ENCODE measurements at regions of chr2 and their contacts with region 1.

Region 1: GRCh38 chr2:36355151-36355889 is at the start of gene CRIM1:
- DNase-seq: peak; percentile 93 to 98 (median 96)
- H3K4me3 ChIP-seq: peak within 1 kb of the TSS; percentile 80 to 98 (median 89)
- H3K27ac ChIP-seq: peak within 1 kb of the TSS; percentile 82 to 94
- H3K4me1 ChIP-seq: peaks cover 3 to 20% (median 12%) of the 10 kb centered on the region in 3 donors
- H3K27me3 ChIP-seq: no peaks in the 10 kb centered on the region
- CTCF ChIP-seq: no peak
- total RNA-seq, gene CRIM1: 154 TPM

Region 2: GRCh38 chr2:36223259-36223658 is 132.1 kb before region 1 on chr2:
- intact Hi-C with region 1: no loop called
- DNase-seq: no peak
- H3K4me3 ChIP-seq: no peak overlapping the region
- H3K27ac ChIP-seq: no peak overlapping the region
- H3K4me1 ChIP-seq: no peaks in the 10 kb centered on the region
- H3K27me3 ChIP-seq: no peaks in the 10 kb centered on the region
- CTCF ChIP-seq: no peak

Region 3: GRCh38 chr2:36478332-36478738 is 123.0 kb after region 1 on chr2:
- intact Hi-C with region 1: no loop called
- DNase-seq: no peak
- H3K4me3 ChIP-seq: no peak overlapping the region
- H3K27ac ChIP-seq: no peak overlapping the region
- H3K4me1 ChIP-seq: no peaks in the 10 kb centered on the region
- H3K27me3 ChIP-seq: no peaks in the 10 kb centered on the region
- CTCF ChIP-seq: no peak

Region 4: DNA sequence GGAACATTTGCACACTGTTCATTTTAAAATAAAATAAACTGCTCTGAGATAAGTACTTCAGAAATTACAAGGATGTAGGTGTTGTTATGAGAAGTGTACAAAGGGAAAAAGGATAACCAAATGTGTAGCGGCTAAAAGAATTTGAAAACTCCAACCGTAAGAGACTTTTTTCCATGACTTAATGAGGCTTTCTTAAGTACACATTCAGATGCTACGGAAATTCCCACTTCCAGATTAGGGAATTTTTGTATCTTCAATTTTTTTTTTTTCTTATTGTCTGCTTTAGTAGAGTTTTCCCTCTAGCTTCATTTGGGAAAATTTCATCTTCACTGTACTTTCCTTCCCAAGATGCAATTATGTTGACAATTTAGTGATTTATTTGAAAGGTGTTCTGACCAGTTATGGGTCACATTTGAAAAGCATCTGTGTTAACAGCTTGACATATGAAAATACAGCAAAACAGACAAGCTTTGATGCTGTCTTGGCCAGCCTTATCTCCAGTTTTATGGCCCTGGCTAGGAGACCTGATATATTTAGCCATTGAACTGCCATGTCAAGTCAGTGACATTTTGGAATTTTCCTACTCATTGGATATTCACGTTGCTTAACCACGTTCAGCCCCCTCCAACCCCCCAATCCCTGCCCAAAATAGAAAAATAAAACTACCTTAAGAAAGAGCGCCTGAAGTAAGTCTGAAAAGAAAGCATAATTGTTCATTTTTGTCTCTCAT is 137.1 kb after region 1 on chr2:
- intact Hi-C with region 1: loop called (anchors 10 kb)
- DNase-seq: peak in 1 of 5 donors; percentile 32
- H3K4me3 ChIP-seq: no peak overlapping the region
- H3K27ac ChIP-seq: peak overlapping the region in 1 of 2 donors; percentile 20
- H3K4me1 ChIP-seq: peaks cover 0 to 7% (median 0%) of the 10 kb centered on the region in 3 donors
- H3K27me3 ChIP-seq: no peaks in the 10 kb centered on the region
- CTCF ChIP-seq: no peak

Measured in kidney (tissue), 22 donors.